BJ (cell line): ENCODE measurements at regions of chr17 and their contacts with region 1.

Region 1: GRCh38 chr17:17496189-17497064 is at the start of gene RASD1:
- DNase-seq: no peak
- H3K4me3 ChIP-seq: peak within 1 kb of the TSS; percentile 64
- H3K27me3 ChIP-seq: no peaks in the 10 kb centered on the region
- CTCF ChIP-seq: peak; percentile 48
- polyA plus RNA-seq, gene RASD1: 0.83 and 0.90 TPM in 2 replicates

Region 2: DNA sequence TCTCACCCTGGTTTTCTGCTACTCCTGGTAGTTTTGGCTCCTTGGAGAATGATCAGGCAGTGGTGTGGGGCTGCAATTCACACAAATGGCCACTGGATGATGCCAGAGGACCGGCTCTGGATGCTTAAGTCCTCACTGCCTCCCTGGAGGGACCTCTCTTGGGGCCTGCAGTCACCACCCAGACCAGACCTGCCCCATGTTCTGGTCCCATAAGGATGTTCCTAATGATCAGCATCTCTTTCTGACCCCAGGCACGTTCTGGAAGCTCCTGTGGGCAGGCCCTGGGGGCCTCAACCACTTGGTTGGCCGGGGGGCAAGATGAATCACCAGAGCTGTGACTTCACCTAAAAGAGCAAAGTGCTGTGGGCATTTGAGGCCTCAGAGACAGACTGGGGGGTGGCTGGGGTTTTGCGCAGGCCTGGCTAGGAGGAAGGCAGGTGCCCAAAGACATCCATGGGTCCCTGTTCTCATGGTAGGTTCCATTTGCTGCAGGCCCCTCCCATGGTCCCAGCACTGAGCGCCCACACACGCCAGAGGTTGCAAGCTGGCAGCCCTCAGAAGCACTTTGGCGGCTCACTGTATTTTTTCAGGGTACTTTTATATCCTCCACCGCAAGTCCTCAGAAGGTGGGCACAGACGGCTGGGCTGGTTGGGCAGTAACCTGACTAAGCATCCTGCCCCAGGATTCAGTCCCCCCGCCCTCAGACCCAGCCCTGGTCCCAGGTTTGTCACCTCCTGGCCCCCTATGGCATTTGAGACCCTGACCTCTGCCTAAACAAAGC is 140.1 kb before region 1 on chr17:
- CTCF ChIA-PET with region 1: interaction called, 71 read pairs
- POLR2A ChIA-PET with region 1: no interaction called
- DNase-seq: no peak
- H3K4me3 ChIP-seq: no peak overlapping the region
- H3K27me3 ChIP-seq: no peaks in the 10 kb centered on the region; the same call in 1 of the 2 replicates
- CTCF ChIP-seq: peak; percentile 100

Region 3: DNA sequence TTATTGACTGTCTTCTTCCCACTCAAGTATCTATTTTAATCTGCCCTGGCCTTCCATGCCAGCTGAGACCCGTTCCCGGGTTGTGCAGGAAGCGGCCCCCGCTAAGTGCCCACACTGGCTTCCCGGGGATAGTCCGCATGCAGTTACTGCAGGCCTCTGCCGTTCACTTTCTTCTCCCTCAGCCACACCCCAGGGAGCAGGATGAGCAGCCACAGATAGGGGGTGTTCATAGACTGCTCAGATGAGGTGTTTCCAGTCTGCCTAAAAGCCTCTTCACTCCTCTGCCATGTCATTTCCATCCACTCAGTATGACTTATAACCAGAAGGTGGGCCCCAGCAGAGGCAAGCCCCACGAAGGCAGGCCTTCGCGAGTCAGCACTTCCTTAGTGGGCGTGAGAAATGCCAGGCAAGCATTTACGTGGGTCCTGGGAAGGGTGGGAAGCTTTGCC is 12.0 kb before region 1 on chr17:
- CTCF ChIA-PET with region 1: no interaction called
- POLR2A ChIA-PET with region 1: no interaction called
- DNase-seq: no peak
- H3K4me3 ChIP-seq: no peak overlapping the region
- H3K27me3 ChIP-seq: no peaks in the 10 kb centered on the region
- CTCF ChIP-seq: no peak

Region 4: GRCh38 chr17:17511881-17512858 is 15.7 kb after region 1 on chr17:
- CTCF ChIA-PET with region 1: interaction called, 44 read pairs
- POLR2A ChIA-PET with region 1: interaction called, 9 read pairs
- DNase-seq: peak; percentile 76
- H3K4me3 ChIP-seq: no peak overlapping the region
- H3K27me3 ChIP-seq: no peaks in the 10 kb centered on the region
- CTCF ChIP-seq: no peak

Region 5: DNA sequence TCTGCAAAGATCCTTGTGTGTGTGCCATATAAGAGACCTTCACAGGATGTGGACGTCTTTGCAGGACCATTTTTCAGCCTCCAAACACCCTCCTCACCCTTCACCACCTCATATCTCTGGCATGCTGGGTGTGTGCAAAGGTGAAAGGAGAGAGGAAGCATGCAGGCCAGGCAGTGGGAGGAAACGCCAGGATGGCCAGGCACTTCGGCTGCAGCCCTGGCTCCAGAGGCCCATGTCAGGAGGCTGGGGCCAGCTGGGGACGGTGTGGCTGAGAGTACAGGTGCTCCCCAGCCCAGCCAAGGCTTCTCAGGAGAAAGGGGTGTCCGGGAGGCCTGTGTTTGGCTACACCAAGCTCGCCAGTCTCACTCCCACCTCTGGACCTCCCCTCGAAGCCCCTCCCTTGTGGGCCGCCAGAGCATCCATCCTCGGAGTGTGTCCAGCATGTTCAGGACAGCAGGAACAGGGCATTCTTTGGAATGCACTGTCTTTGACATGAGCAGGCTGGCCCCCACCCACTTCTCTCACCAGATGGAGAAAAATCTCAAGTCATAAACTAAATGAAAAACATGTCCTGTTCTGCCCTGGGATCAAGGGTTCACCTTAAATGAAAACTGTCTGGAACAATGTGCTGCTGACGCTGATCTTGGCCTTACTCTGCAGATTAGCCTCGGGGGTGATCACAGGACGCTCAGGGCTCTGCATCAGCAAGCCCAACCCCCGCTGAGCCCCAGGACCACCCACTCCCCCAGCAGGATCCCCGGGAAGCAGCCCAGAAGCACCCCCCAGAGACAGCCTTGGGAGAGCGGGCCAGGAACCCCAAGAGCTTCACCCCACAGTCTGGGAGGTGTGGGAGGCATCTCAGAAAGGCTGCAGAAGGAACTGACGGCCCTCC is 79.2 kb after region 1 on chr17:
- CTCF ChIA-PET with region 1: interaction called, 149 read pairs
- POLR2A ChIA-PET with region 1: no interaction called
- DNase-seq: peak; percentile 58
- H3K4me3 ChIP-seq: no peak overlapping the region
- H3K27me3 ChIP-seq: no peaks in the 10 kb centered on the region
- CTCF ChIP-seq: no peak

Region 6: DNA sequence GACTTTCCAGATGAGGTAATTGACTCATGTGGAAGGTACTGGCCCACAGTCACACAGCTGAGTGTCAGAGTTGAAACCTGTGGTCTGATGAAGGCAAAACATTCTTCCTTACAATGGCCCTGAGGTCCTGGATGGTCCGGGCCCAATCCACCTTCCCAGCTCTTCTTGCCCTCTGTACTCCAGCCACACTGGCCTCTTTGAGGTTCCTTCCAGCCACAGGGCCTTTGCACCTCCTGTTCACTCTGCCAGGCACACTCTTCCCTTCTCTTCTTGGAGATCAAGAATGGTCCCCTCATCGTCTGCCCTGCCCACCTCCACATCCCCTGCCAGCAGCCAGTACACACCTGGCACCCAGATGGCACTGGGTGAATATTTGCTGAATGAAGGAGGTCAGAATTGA is 101.6 kb after region 1 on chr17:
- CTCF ChIA-PET with region 1: no interaction called
- POLR2A ChIA-PET with region 1: no interaction called
- DNase-seq: no peak
- H3K4me3 ChIP-seq: no peak overlapping the region
- H3K27me3 ChIP-seq: no peaks in the 10 kb centered on the region
- CTCF ChIP-seq: no peak

Region 7: GRCh38 chr17:17613708-17614114 is 117.3 kb after region 1 on chr17:
- CTCF ChIA-PET with region 1: interaction called, 37 read pairs
- POLR2A ChIA-PET with region 1: no interaction called
- DNase-seq: no peak
- H3K4me3 ChIP-seq: no peak overlapping the region
- H3K27me3 ChIP-seq: no peaks in the 10 kb centered on the region
- CTCF ChIP-seq: peak; percentile 82

Region 8: GRCh38 chr17:17641621-17642409 is 145.4 kb after region 1 on chr17:
- CTCF ChIA-PET with region 1: interaction called, 54 read pairs
- POLR2A ChIA-PET with region 1: no interaction called
- DNase-seq: peak; percentile 21
- H3K4me3 ChIP-seq: no peak overlapping the region
- H3K27me3 ChIP-seq: peaks cover 3% of the 10 kb centered on the region; the same call in 1 of the 2 replicates
- CTCF ChIP-seq: peak; percentile 86